ENCODE measurements at regions of chr3 and their contacts with region 1.

Region 1: DNA sequence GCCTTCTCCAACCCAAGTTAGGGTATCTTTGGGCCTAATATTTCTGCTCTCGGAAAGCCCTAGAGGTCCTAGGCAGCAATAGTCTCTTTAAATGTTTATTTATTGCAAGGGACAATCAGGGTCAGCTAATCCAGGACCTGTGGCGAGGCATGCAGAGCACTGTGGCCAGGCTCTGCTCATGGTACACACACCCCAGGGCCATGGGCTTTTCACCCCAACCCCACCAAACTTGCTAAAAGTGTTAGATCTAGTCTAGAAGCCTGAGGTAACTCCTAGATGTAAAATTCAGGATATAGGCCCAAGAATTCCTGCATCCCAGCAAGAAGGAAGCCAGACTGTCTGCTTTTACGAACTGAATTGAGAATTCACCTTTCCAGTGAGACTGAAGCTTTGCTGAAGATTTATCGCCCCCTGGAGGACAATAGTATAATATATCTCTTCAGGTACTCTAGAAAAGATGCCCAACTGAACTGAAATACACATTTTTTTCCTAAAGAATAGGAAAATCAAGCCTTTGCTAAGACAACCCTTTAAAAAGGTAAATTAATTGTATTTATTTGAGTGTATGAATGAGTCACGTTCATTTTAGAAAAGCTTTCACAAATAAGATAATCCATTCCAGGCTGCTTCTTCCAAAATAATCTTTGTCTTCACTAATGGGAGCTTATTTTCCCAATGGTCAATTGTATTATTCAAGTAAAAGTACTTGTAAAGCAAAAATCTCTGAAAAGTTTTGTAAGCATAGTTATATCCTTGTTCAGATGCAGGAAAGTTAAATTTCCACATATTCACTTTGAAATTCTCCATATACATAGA is 89.8 kb downstream of the LRRC3B start:
- DNase-seq: no peak
- H3K4me3 Mint-ChIP-seq: no peak overlapping the region
- H3K27ac Mint-ChIP-seq: no peak overlapping the region
- H3K4me1 Mint-ChIP-seq: no peaks in the 10 kb centered on the region
- H3K27me3 Mint-ChIP-seq: no peaks in the 10 kb centered on the region

Region 2: GRCh38 chr3:25532431-25533162 is 1179.8 kb before region 1 on chr3:
- CTCF ChIA-PET with region 1: no interaction called
- POLR2A ChIA-PET with region 1: no interaction called
- intact Hi-C with region 1: loop called (anchors 2 kb)
- DNase-seq: peak; percentile 45
- H3K4me3 Mint-ChIP-seq: no peak overlapping the region
- H3K27ac Mint-ChIP-seq: no peak overlapping the region
- H3K4me1 Mint-ChIP-seq: no peaks in the 10 kb centered on the region
- H3K27me3 Mint-ChIP-seq: peaks cover 2% of the 10 kb centered on the region

Region 3: DNA sequence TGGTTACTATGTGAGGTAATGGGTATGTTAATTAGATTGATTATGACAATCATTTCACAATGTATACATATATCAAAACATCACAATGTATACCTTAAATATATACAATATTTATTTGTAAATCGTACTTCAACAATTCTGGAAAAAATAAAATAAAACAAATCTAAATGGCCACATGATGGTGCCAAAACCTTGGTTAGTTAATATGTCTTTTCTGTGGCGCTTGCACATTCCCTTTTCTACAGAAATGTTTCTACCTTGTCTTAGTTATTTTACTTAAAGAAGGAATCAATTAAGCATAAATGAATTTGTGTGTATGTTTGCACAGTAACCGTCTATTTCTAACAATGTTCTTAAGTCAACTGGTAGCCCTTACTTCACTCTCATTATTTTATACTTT is 869.1 kb before region 1 on chr3:
- CTCF ChIA-PET with region 1: no interaction called
- POLR2A ChIA-PET with region 1: no interaction called
- intact Hi-C with region 1: loop called (anchors 10 kb)
- DNase-seq: no peak
- H3K4me3 Mint-ChIP-seq: no peak overlapping the region
- H3K27ac Mint-ChIP-seq: no peak overlapping the region
- H3K4me1 Mint-ChIP-seq: no peaks in the 10 kb centered on the region
- H3K27me3 Mint-ChIP-seq: no peaks in the 10 kb centered on the region

Region 4: GRCh38 chr3:26622621-26623418 is 89.6 kb before region 1 on chr3 and contains the start of gene LRRC3B:
- CTCF ChIA-PET with region 1: no interaction called
- POLR2A ChIA-PET with region 1: no interaction called
- intact Hi-C with region 1: no loop called
- DNase-seq: no peak
- H3K4me3 Mint-ChIP-seq: no peak within 1 kb of the TSS
- H3K27ac Mint-ChIP-seq: no peak within 1 kb of the TSS
- H3K4me1 Mint-ChIP-seq: no peaks in the 10 kb centered on the region
- H3K27me3 Mint-ChIP-seq: peaks cover 40% of the 10 kb centered on the region
- total RNA-seq, gene LRRC3B: not detected